Activated naive CD4-positive, alpha-beta T cell treated with anti-CD3 and anti-CD28 coated beads, Interleukin-2, amount 10 ng/mL, durations not matched to agents 7 days and 5 days (primary cell): ENCODE measurements at regions of chr17 and their contacts with region 1.

Region 1: DNA sequence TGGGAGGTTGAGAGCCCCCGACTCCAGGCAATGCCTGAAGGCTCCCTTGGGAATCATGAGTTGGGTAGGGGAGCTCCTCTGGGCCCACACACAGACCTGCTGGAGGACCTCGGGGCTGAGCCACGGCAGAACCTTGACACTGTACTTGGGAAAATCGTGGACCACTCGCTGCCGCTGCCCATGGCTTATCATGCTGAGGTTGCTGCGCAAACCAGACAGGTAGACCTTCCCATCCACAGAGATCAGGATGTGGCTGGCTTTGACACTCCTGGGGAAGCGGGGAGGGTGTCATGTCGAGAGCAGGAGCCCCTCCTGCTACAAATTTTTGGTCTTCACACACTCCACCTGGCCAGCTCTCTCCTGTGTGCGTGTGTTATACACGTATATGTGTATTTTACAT is 7.2 kb upstream of the LIMD2 start:
- DNase-seq: no peak
- H3K4me3 Mint-ChIP-seq: peak overlapping the region; percentile 38
- H3K27ac Mint-ChIP-seq: peak overlapping the region; percentile 83
- H3K4me1 Mint-ChIP-seq: peaks cover 81% of the 10 kb centered on the region
- H3K27me3 Mint-ChIP-seq: no peaks in the 10 kb centered on the region

Region 2: GRCh38 chr17:63519972-63520882 is 186.9 kb before region 1 on chr17:
- CTCF ChIA-PET with region 1: no interaction called
- DNase-seq: no peak
- H3K4me3 Mint-ChIP-seq: no peak overlapping the region
- H3K27ac Mint-ChIP-seq: no peak overlapping the region
- H3K4me1 Mint-ChIP-seq: peaks cover 5% of the 10 kb centered on the region
- H3K27me3 Mint-ChIP-seq: peaks cover 54% of the 10 kb centered on the region

Region 3: DNA sequence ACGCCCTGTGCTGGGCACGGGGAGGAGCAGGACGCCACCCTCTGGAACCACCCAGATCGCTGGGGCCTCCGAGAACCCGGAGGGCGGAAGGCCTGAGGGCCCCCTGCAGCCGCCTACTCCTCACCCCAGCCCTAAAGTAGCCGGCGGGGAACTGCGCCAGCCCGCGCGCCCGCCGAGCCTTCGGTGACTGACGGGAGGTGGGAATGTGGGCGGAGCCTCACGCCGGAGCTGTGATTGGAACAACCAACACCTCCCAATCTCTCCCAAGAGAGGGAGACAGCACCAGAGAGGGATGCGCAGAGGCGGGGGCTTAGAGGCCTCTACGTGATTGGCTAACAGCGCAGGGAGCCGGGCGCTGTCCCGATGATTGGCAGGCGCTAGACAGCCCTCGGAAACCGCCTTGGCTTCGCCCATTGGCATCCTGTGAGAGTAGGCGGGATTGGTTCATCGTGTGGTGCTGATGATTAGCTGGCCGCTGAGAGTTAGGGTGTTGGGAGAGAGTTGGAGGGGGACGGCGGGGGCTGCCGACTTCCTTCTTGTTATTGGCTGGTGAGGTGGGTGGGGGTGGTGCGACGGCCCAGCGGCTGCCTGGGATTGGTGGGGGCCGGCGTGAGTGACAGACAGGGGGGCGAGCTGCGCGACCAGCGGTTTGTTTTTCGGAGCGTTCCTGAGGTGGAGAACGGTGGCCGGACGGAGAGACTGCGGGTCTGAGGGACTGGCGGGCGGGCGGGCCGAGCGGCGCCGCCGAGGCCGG is 85.2 kb before region 1 on chr17 and contains the start of gene MAP3K3:
- CTCF ChIA-PET with region 1: interaction called, 10 read pairs
- DNase-seq: peak; percentile 99
- H3K4me3 Mint-ChIP-seq: peak within 1 kb of the TSS; percentile 97
- H3K27ac Mint-ChIP-seq: peak within 1 kb of the TSS; percentile 94
- H3K4me1 Mint-ChIP-seq: peaks cover 31% of the 10 kb centered on the region
- H3K27me3 Mint-ChIP-seq: peaks cover 20% of the 10 kb centered on the region

Region 4: DNA sequence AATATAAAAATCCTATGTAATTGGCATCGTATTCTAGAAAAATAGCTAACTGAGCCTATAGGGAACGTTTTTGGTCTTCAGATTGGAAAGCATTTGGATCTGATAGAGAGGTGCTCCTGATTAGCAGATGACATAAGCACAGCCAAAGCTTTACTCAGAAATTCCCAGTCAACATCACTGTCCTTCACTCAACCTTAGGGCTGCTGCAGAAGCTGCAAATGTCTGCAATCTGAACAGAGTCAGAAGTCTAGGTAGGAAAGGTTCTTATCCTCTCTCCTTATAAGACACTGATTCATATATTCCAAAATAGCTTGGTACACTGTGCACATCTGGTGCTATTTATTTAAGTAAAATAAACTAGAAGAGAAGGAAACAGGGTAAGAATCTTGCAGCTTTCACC is 15.3 kb after region 1 on chr17:
- CTCF ChIA-PET with region 1: interaction called, 19 read pairs
- DNase-seq: no peak
- H3K4me3 Mint-ChIP-seq: no peak overlapping the region
- H3K27ac Mint-ChIP-seq: no peak overlapping the region
- H3K4me1 Mint-ChIP-seq: no peaks in the 10 kb centered on the region
- H3K27me3 Mint-ChIP-seq: no peaks in the 10 kb centered on the region

Region 5: GRCh38 chr17:63881876-63882601 is 174.9 kb after region 1 on chr17 and contains the start of gene GH2:
- CTCF ChIA-PET with region 1: no interaction called
- DNase-seq: peak; percentile 77
- H3K4me3 Mint-ChIP-seq: no peak within 1 kb of the TSS
- H3K27ac Mint-ChIP-seq: no peak within 1 kb of the TSS
- H3K4me1 Mint-ChIP-seq: no peaks in the 10 kb centered on the region
- H3K27me3 Mint-ChIP-seq: peaks cover 54% of the 10 kb centered on the region